Caco-2 (cell line): ENCODE measurements at regions of chrX and their contacts with region 1.

Region 1: GRCh38 chrX:14697451-14697850 is 168.1 kb downstream of the GLRA2 start:
- DNase-seq: peak; percentile 46 to 51
- H3K4me3 ChIP-seq: no peak overlapping the region
- H3K4me3 Mint-ChIP-seq: no peak overlapping the region
- H3K27ac Mint-ChIP-seq: no peak overlapping the region
- H3K4me1 ChIP-seq: 0 out of 2 replicates have a peak, but pooled peaks cover 4% of the 10 kb centered on the region
- H3K4me1 Mint-ChIP-seq: no peaks in the 10 kb centered on the region
- H3K27me3 ChIP-seq: no peaks in the 10 kb centered on the region
- H3K27me3 Mint-ChIP-seq: no peaks in the 10 kb centered on the region
- CTCF ChIP-seq: peak; percentile 26 to 44

Region 2: GRCh38 chrX:14616836-14617235 is 80.6 kb before region 1 on chrX:
- CTCF ChIA-PET with region 1: no interaction called
- POLR2A ChIA-PET with region 1: no interaction called
- intact Hi-C with region 1: loop called (anchors 10 kb)
- DNase-seq: no peak
- H3K4me3 ChIP-seq: no peak overlapping the region
- H3K4me3 Mint-ChIP-seq: no peak overlapping the region
- H3K27ac Mint-ChIP-seq: no peak overlapping the region
- H3K4me1 ChIP-seq: no peaks in the 10 kb centered on the region
- H3K4me1 Mint-ChIP-seq: no peaks in the 10 kb centered on the region
- H3K27me3 ChIP-seq: no peaks in the 10 kb centered on the region
- H3K27me3 Mint-ChIP-seq: no peaks in the 10 kb centered on the region
- CTCF ChIP-seq: no peak

Region 3: DNA sequence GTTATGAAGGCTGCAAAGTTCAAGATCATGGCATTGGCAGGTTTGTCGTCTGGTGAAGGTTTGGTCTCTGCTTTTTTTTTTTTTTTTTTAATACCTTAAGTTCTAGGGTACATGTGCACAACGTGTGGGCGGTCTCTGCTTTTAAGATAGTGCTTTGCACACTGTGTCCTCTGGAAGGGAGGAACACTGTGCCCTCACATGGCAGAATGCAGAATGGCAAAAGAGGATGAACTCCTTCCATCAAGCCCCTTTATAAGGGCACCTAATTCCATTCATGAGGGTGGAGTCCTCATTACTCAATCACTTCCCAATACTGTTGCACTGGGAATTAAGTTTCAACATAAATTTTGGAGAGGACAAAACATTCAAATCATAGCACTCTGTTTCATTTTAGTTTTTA is 66.7 kb before region 1 on chrX:
- CTCF ChIA-PET with region 1: no interaction called
- POLR2A ChIA-PET with region 1: no interaction called
- intact Hi-C with region 1: no loop called
- DNase-seq: peak in 1 of 2 experiments; percentile 1
- H3K4me3 ChIP-seq: no peak overlapping the region
- H3K4me3 Mint-ChIP-seq: no peak overlapping the region
- H3K27ac Mint-ChIP-seq: no peak overlapping the region
- H3K4me1 ChIP-seq: no peaks in the 10 kb centered on the region
- H3K4me1 Mint-ChIP-seq: no peaks in the 10 kb centered on the region
- H3K27me3 ChIP-seq: no peaks in the 10 kb centered on the region
- H3K27me3 Mint-ChIP-seq: peaks cover 5% of the 10 kb centered on the region
- CTCF ChIP-seq: no peak